PC-3 (cell line): ENCODE measurements at regions of chr17 and their contacts with region 1.

Region 1: DNA sequence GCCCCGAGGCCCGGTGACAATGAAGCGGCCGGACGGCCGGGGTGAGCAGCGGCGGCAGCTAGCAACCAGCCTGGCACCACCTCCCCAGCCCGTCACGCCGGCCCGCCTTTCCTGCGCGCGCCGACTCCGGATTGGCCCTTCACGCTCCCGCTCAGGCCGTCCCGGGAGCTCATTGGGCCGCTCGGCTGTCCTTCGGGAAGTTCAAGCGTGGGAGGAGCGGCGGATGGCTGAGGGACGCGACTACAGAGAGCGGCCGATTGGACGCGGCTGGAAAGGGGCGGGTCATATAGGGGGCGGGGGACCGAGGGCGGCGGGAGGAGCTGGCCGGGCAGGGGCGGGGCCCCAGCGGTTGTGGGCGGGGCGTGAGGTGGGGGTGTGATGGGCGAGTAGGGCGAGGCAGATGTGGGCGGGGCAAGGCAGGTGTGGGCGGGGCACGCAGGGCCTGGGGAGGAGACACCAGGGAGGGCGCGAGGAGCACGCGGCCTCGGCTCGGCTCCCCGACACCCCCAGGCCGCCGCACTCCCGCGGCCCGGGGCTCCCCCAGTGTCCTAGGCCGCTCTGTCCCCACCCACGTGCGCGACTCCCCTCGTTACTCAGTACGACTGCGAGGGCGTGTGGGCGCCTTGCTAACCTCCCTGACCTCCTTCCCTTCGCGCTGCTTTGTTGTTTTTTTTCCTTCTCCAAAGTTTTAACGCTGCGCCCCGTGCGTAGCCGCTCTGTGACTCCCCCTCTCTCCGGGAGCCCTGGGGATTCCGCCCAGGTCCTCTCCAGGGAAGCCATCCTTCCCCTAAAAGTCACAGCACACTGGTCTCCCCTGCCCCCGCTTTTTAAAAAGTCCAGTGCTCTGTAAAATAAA is at the start of gene CEP131:
- DNase-seq: peak; percentile 98
- ATAC-seq: peak; percentile 98
- H3K4me3 ChIP-seq: peak within 1 kb of the TSS; percentile 91
- H3K27ac ChIP-seq: no peak within 1 kb of the TSS; the same call in 1 of the 2 replicates
- H3K4me1 ChIP-seq: peaks cover 19% of the 10 kb centered on the region
- H3K27me3 ChIP-seq: no peaks in the 10 kb centered on the region
- CTCF ChIP-seq: no peak
- total RNA-seq, gene CEP131: 32.1 and 48.0 TPM in 2 replicates

Region 2: GRCh38 chr17:81119223-81120148 is 103.6 kb before region 1 on chr17:
- CTCF ChIA-PET with region 1: no interaction called
- POLR2A ChIA-PET with region 1: no interaction called
- intact Hi-C with region 1: loop called (anchors 1 kb)
- DNase-seq: peak; percentile 98
- ATAC-seq: peak; percentile 81
- H3K4me3 ChIP-seq: peak overlapping the region; percentile 73
- H3K27ac ChIP-seq: peak overlapping the region; percentile 21; the same call in 1 of the 2 replicates
- H3K4me1 ChIP-seq: peaks cover 9% of the 10 kb centered on the region
- H3K27me3 ChIP-seq: no peaks in the 10 kb centered on the region
- CTCF ChIP-seq: peak; percentile 72

Region 3: DNA sequence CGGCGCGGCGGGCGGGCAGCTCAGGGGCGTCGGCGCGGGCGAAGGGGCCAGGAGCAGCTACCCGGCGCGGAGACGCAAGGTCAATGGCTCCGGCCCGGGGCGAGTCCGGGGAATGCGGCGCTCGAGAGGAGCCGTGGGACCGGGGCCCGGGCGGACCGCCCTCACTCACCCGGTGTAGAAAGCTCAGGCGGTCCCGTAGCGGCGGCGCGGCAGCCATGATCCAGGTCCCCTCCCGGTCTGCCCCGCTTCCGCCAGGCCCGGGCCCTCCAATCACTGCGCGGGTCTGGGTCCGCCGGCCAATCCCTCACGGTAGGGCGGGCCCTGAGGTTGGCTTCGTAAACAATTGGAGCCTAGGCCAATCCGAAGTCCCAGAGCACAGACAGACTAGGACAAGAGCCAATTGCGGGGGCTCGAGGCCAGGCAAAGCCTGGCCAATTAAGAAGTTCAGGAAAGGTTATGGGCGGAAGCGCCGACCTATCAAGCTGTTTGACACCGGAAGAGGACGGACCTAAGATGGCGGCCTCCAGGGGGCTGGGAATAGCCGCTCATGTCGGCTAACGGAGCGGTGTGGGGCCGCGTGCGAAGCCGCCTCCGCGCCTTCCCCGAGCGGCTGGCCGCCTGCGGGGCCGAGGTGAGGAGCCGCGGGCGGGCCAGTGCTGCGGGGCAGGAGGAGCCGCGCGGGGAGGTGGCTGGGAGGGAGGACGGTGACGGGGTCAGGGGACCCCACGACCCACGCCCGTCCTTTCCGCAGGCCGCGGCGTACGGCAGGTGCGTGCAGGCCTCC is 15.9 kb after region 1 on chr17 and contains the starts of genes NDUFAF8 and TEPSIN:
- CTCF ChIA-PET with region 1: interaction called, 4 read pairs
- POLR2A ChIA-PET with region 1: interaction called, 3 read pairs
- intact Hi-C with region 1: loop called (anchors 1 kb)
- DNase-seq: peak; percentile 99
- ATAC-seq: peak; percentile 96
- H3K4me3 ChIP-seq: peak within 1 kb of the TSS; percentile 77
- H3K27ac ChIP-seq: peak within 1 kb of the TSS; percentile 19
- H3K4me1 ChIP-seq: peaks cover 18% of the 10 kb centered on the region; the same call in 1 of the 2 replicates
- H3K27me3 ChIP-seq: no peaks in the 10 kb centered on the region
- CTCF ChIP-seq: no peak
- total RNA-seq, gene NDUFAF8: 125 and 160 TPM in 2 replicates
- total RNA-seq, gene TEPSIN: 28.8 and 44.1 TPM in 2 replicates